Endothelial cell of umbilical vein (primary cell): ENCODE measurements at regions of chr2 and their contacts with region 1.

Region 1: DNA sequence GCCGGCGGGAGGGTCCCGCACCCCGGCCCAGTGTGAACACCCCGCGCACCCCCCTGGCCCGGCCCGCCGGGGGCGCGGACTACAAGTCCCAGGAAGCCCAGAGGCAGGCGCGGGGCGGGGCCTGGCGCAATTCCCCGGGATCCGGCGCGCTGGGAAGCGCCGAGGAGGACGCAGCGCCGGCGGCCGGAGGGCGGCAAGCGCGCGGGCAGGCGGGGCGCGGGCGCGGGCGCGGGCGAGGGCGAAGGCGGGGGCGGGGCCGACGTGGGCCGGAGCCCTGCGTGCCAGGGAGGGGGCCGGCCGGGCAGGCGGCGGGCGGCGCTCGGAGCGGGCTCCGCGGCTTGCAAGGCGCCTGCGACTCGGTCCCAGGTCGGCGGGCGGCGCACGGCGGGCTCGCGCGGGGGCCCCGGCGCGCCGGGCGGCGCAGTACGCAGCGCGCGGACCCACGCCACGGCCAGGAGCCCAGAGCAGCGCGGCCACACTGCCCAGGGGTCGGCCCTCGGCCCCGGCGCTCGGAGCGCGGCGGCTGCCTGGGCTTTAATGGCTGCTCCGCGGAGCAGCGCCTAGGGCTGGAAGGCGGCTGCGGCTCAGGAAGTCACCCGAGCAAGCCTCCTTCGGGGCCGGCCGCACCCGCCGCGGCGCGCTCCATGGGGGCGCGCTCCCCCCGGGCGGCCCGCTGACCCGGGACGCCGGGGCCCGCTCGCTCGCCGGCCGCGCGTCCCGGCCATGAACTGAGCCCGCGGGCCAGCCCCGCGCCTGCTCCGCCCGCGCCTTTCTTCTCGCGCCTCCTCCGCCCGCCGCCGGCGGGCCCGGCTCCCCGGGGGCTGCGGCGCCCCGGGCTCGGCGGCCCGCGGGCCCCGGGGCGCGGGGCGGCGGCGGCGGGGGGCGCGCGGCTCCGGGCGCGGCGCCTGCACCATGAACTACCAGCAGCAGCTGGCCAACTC is at the start of gene AGAP1:
- DNase-seq: peak; percentile 83
- H3K4me3 ChIP-seq: peak within 1 kb of the TSS; percentile 43 to 56 (median 47)
- H3K27ac ChIP-seq: peak within 1 kb of the TSS; percentile 38
- H3K4me1 ChIP-seq: peaks cover 11% of the 10 kb centered on the region
- H3K27me3 ChIP-seq: no peaks in the 10 kb centered on the region
- CTCF ChIP-seq: no peak
- POLR2A ChIP-seq: peak; percentile 52
- total RNA-seq, gene AGAP1: 19.5 and 20.9 TPM in 2 replicates

Region 2: DNA sequence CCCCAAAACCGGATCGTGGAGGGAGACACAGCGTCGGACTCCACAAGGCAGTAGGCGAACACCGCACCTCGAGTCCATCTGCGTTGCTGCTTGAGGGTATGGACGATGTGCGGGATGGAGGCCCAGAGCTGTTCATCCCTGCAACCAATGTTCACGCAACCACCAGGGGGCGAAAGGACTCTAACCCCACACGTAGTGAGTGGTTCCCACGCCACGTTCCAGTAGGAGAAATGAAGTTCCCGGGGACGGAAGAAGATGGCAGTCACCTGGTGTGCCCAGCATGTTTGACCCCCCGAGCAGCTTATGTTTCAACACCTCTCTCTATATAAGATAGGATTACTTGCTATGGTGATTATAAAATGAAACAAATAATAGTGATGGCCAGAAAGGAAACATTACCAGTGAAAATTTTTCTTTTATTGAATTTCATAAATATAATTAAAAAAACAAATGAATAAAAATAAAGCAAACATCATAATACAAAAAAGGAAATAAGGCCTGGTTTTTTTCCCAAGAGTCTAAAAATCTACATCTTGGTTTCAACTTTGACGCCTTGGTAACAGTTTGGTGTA is 358.0 kb before region 1 on chr2:
- CTCF ChIA-PET with region 1: interaction called, 4 read pairs
- POLR2A ChIA-PET with region 1: no interaction called
- dilution Hi-C with region 1: no loop called
- intact Hi-C with region 1: loop called (anchors 5 kb)
- DNase-seq: peak; percentile 63
- H3K4me3 ChIP-seq: no peak overlapping the region
- H3K27ac ChIP-seq: no peak overlapping the region
- H3K4me1 ChIP-seq: peaks cover 2% of the 10 kb centered on the region
- H3K27me3 ChIP-seq: peaks cover 2 to 6% of the 10 kb centered on the region in 2 experiments
- CTCF ChIP-seq: peak; percentile 66 to 79
- POLR2A ChIP-seq: no peak

Region 3: GRCh38 chr2:235238537-235238936 is 255.5 kb before region 1 on chr2:
- CTCF ChIA-PET with region 1: no interaction called
- POLR2A ChIA-PET with region 1: no interaction called
- dilution Hi-C with region 1: no loop called
- intact Hi-C with region 1: loop called (anchors 5 kb)
- DNase-seq: peak; percentile 86
- H3K4me3 ChIP-seq: no peak overlapping the region
- H3K27ac ChIP-seq: peak overlapping the region; percentile 19
- H3K4me1 ChIP-seq: peaks cover 12% of the 10 kb centered on the region
- H3K27me3 ChIP-seq: no peaks in the 10 kb centered on the region
- CTCF ChIP-seq: no peak
- POLR2A ChIP-seq: no peak

Region 4: GRCh38 chr2:235270956-235271355 is 223.1 kb before region 1 on chr2:
- CTCF ChIA-PET with region 1: no interaction called
- POLR2A ChIA-PET with region 1: no interaction called
- dilution Hi-C with region 1: no loop called
- intact Hi-C with region 1: loop called (anchors 1 kb)
- DNase-seq: no peak
- H3K4me3 ChIP-seq: no peak overlapping the region
- H3K27ac ChIP-seq: no peak overlapping the region
- H3K4me1 ChIP-seq: peaks cover 22% of the 10 kb centered on the region
- H3K27me3 ChIP-seq: no peaks in the 10 kb centered on the region
- CTCF ChIP-seq: no peak
- POLR2A ChIP-seq: no peak

Region 5: GRCh38 chr2:235518322-235519090 is 24.5 kb after region 1 on chr2:
- CTCF ChIA-PET with region 1: no interaction called
- POLR2A ChIA-PET with region 1: no interaction called
- dilution Hi-C with region 1: no loop called
- intact Hi-C with region 1: loop called (anchors 1 kb)
- DNase-seq: peak; percentile 85
- H3K4me3 ChIP-seq: no peak overlapping the region
- H3K27ac ChIP-seq: no peak overlapping the region
- H3K4me1 ChIP-seq: peaks cover 11% of the 10 kb centered on the region
- H3K27me3 ChIP-seq: no peaks in the 10 kb centered on the region
- CTCF ChIP-seq: no peak
- POLR2A ChIP-seq: no peak

Region 6: DNA sequence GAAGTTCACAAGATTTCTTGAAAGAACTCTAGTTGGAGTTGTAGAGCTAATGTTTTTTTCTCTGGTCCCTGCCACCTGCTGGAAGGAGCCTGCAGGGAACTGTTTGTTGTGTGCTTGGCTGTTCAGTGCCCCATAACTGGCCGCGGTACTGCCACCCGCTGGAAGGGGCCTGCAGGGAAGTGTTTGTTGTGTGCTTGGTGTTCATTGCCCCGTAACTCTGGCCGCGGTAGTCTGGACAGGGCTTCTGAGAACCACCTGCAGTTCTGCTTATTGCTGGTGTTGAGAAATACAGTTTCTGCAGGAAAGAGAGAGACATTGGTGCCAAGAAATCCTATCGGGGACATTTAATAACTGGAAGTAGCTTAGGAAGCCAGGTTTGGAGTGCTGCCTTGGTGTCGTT is 57.9 kb after region 1 on chr2:
- CTCF ChIA-PET with region 1: interaction called, 23 read pairs
- POLR2A ChIA-PET with region 1: no interaction called
- dilution Hi-C with region 1: no loop called
- intact Hi-C with region 1: loop called (anchors 1 kb)
- DNase-seq: peak; percentile 81
- H3K4me3 ChIP-seq: no peak overlapping the region
- H3K27ac ChIP-seq: no peak overlapping the region
- H3K4me1 ChIP-seq: no peaks in the 10 kb centered on the region
- H3K27me3 ChIP-seq: no peaks in the 10 kb centered on the region
- CTCF ChIP-seq: peak; percentile 59 to 86
- POLR2A ChIP-seq: no peak

Region 7: GRCh38 chr2:235669269-235669831 is 175.3 kb after region 1 on chr2:
- CTCF ChIA-PET with region 1: no interaction called
- POLR2A ChIA-PET with region 1: no interaction called
- dilution Hi-C with region 1: no loop called
- intact Hi-C with region 1: loop called (anchors 2 kb)
- DNase-seq: peak; percentile 35
- H3K4me3 ChIP-seq: peak overlapping the region in 1 of 3 experiments; percentile 48
- H3K27ac ChIP-seq: no peak overlapping the region
- H3K4me1 ChIP-seq: peaks cover 2% of the 10 kb centered on the region
- H3K27me3 ChIP-seq: peaks cover 22 to 27% of the 10 kb centered on the region in 2 experiments
- CTCF ChIP-seq: no peak
- POLR2A ChIP-seq: no peak

Region 8: DNA sequence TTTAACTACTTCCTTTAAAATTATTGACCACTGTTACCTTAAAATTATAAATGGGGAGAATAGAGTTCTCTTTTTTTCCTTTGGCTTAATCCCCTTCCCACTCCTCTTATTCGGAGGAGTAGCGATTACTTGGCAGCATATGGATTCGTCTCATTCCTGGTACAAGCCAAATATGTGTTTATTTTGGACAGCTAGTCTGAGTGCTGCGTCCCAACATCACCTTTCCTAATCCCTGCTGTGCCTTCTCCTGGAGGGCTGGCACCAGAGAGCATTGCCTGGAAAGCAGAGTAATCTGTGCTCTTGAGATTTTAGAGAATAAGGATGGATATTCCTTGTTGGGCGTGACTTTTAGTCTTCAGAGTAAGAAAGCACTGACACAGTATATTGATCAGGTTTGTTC is 185.4 kb after region 1 on chr2:
- CTCF ChIA-PET with region 1: no interaction called
- POLR2A ChIA-PET with region 1: no interaction called
- dilution Hi-C with region 1: no loop called
- intact Hi-C with region 1: no loop called
- DNase-seq: no peak
- H3K4me3 ChIP-seq: no peak overlapping the region
- H3K27ac ChIP-seq: no peak overlapping the region
- H3K4me1 ChIP-seq: no peaks in the 10 kb centered on the region
- H3K27me3 ChIP-seq: no peaks in the 10 kb centered on the region
- CTCF ChIP-seq: no peak
- POLR2A ChIP-seq: no peak